Activated CD4-positive, alpha-beta memory T cell treated with anti-CD3 and anti-CD28 coated beads for 36 hours (primary cell): ENCODE measurements at regions of chr6 and their contacts with region 1.

Region 1: DNA sequence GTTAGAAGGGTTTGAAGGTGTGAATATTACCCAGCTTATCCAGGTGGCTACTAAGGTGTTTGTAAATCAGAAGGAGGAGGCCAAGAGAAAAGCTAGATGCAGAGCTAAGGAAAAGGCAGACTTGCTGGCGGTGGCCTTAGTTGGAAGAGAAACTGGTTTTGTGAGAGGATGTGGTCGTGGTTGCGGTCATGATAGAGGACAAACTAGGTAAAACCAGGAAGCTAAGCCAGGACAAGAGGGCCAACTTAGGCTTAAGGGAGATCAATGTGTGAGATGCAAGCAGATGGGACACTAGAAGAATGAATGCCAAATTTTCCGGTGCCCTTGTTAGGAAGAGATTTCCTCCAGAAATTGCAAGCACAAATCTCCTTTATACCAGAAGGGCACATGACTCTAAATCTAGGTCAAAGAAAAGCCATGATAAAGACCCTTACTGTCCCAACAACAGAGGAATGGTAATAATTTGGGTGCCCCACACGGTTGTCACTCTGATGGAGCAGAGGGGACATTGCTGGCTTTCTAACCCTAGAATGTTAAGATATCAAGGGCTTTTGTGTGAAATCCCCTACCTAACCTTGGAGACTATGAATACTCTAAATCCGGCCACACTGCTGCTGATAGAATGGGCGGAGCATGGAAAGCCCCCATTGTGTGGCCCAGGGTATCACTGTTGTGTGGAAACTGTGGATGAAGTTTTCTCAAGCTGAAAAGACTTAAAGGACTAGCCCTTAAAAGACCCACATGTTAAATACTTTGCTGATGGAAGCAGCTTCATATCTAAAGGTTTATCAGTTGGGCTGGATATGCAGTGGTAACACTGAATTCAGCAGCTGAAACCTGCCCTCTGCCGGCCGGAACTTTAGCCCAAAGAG is 7.8 kb downstream of the IL22RA2 start:
- DNase-seq: peak; percentile 69
- H3K4me3 Mint-ChIP-seq: no peak overlapping the region
- H3K27ac Mint-ChIP-seq: no peak overlapping the region
- H3K4me1 Mint-ChIP-seq: peaks cover 32% of the 10 kb centered on the region
- H3K27me3 Mint-ChIP-seq: peaks cover 34% of the 10 kb centered on the region

Region 2: GRCh38 chr6:136967876-136968752 is 197.5 kb before region 1 on chr6:
- CTCF ChIA-PET with region 1: interaction called, 3 read pairs
- POLR2A ChIA-PET with region 1: no interaction called
- intact Hi-C with region 1: loop called (anchors 1 kb)
- DNase-seq: peak; percentile 79
- H3K4me3 Mint-ChIP-seq: no peak overlapping the region
- H3K27ac Mint-ChIP-seq: no peak overlapping the region
- H3K4me1 Mint-ChIP-seq: peaks cover 4% of the 10 kb centered on the region
- H3K27me3 Mint-ChIP-seq: peaks cover 21% of the 10 kb centered on the region

Region 3: GRCh38 chr6:137089305-137089704 is 76.3 kb before region 1 on chr6:
- CTCF ChIA-PET with region 1: interaction called, 58 read pairs
- POLR2A ChIA-PET with region 1: interaction called, 3 read pairs
- intact Hi-C with region 1: loop called (anchors 1 kb)
- DNase-seq: no peak
- H3K4me3 Mint-ChIP-seq: no peak overlapping the region
- H3K27ac Mint-ChIP-seq: no peak overlapping the region
- H3K4me1 Mint-ChIP-seq: peaks cover 19% of the 10 kb centered on the region
- H3K27me3 Mint-ChIP-seq: peaks cover 7% of the 10 kb centered on the region

Region 4: GRCh38 chr6:137102851-137103492 is 62.6 kb before region 1 on chr6:
- CTCF ChIA-PET with region 1: interaction called, 10 read pairs
- POLR2A ChIA-PET with region 1: interaction called, 4 read pairs
- intact Hi-C with region 1: loop called (anchors 2 kb)
- DNase-seq: peak; percentile 42
- H3K4me3 Mint-ChIP-seq: no peak overlapping the region
- H3K27ac Mint-ChIP-seq: peak overlapping the region; percentile 67
- H3K4me1 Mint-ChIP-seq: peaks cover 31% of the 10 kb centered on the region
- H3K27me3 Mint-ChIP-seq: no peaks in the 10 kb centered on the region

Region 5: DNA sequence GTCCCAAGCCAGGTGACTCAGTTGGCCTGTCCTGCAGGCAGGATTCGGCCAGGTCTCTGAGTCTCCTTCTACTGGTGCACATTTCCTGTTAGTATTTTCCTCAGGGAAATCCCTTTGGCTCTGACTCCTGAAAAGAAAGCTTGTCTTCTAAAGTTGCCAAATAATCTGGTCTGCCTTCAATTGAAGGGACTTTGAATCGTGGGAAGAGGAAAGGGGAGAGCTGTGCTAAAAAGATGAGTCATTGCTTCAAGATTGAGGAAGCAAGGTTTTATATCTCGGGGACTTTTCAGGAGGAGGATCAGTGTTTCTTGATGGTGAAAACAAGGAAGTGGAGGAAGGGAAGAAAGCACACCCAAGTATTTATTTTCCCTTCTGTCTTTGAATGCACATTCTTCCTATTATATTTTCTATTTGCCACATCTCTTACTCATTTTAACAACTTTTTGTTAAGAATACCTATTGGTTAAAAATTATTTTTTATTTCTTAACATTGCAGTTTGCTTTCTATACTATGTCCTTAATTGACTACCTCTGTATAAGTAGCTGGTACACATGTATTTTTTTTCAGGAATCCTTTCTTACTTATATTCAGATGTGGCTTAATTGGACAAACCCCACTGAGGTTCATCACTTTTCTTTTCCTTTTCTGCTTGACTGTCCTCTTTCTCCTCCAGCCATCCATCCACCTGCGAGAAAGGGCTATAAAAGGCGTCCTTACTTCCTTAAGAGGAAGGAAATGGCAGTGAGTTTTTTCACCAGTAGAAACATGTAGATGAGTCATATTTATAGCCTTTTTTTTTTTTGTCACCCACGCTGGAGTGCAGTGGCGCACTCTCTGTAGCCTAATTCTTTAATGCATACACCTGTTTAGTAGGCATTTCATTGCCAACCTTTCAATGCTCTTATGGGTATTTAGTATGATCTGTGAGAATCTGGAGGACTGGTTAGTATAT is 68.6 kb after region 1 on chr6:
- CTCF ChIA-PET with region 1: interaction called, 5 read pairs
- POLR2A ChIA-PET with region 1: no interaction called
- intact Hi-C with region 1: loop called (anchors 1 kb)
- DNase-seq: peak; percentile 29
- H3K4me3 Mint-ChIP-seq: peak overlapping the region; percentile 10
- H3K27ac Mint-ChIP-seq: no peak overlapping the region
- H3K4me1 Mint-ChIP-seq: peaks cover 49% of the 10 kb centered on the region
- H3K27me3 Mint-ChIP-seq: peaks cover 2% of the 10 kb centered on the region

Region 6: GRCh38 chr6:137246791-137247202 is 81.2 kb after region 1 on chr6:
- CTCF ChIA-PET with region 1: no interaction called
- POLR2A ChIA-PET with region 1: no interaction called
- intact Hi-C with region 1: no loop called
- DNase-seq: no peak
- H3K4me3 Mint-ChIP-seq: no peak overlapping the region
- H3K27ac Mint-ChIP-seq: no peak overlapping the region
- H3K4me1 Mint-ChIP-seq: no peaks in the 10 kb centered on the region
- H3K27me3 Mint-ChIP-seq: no peaks in the 10 kb centered on the region